ENCODE measurements at regions of chr4 and their contacts with region 1.

Region 1: DNA sequence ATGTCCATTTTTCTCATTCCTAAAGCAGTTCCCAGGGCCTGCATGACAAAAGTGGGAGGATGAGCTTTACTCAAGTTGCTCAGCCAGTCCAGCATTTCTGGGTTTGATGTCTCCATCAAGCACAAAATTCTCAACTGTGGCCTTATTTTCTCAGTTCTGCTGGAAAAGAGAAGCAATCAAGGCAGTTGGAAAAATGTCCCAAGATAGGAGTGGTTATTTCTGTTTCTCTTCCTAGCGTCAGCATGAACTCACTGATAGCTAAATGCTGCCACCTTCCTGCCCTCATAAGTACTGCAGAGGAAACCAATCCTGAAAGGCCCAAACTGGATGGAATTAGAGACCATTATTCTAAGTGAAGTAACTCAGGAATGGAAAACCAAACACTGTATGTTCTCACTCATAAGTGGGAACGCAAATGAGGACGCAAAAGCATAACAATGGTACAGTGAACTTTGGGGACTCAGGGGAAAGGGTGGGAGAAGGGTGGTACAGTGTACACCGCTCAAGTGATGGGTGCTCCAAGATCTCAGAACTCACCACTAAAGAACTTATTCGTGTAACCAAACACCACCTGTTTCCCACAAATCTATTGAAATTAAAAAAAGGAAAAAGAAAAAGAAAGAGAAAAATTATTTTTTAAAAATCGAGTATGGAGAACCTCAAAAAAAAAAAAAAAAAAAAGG is 29.6 kb downstream of the ADH7 start:
- DNase-seq: peak; percentile 74
- ATAC-seq: peak; percentile 67
- H3K4me3 ChIP-seq: no peak overlapping the region
- H3K27ac ChIP-seq: peak overlapping the region; percentile 92
- H3K4me1 ChIP-seq: peaks cover 44% of the 10 kb centered on the region
- H3K27me3 ChIP-seq: no peaks in the 10 kb centered on the region
- CTCF ChIP-seq: peak; percentile 94
- EP300 ChIP-seq: no peak
- POLR2A ChIP-seq: no peak
- RAD21 ChIP-seq: peak; percentile 94

Region 2: DNA sequence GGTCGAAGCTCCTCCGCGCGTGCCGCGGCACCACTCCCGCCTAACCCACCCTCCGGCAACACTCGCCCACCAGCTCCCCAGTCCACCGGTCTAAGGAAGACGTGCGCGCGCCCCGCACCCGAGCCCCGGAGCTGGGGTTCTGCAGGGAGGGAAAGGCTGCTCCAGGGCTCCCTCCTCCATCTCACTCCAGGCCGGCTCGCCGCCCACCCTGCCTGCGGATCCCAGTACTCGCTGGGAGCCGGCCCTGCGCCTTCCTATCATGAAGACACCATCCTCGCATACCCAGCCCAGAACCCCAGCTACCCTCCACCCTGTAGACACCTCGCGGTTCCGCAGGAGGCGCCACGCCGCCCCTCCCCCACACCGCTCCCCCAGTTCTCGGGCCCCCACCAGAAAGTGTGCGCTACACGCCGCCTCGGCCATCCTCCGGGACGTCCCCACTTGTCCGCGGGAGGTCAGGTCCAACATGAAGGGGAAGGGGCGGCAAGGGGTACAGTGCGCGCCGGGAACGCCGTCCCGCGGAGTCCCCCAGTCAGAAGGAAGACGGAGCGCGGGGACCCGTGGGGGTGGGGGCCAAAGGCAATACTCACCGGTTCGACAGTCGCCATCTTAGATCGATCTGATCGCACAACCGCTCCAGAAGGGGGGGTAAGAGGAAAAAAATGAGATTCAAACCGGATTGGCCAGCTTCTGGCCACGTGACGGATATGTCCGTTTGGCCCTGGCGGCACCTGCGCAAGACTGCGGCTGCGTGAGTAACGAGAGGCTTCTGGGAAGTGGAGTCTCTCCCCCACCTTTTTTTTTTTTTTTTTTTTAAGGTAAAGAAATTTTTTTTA is 476.9 kb before region 1 on chr4 and contains the start of gene EIF4E:
- CTCF ChIA-PET with region 1: no interaction called
- POLR2A ChIA-PET with region 1: interaction called, 6 read pairs
- in situ Hi-C with region 1: no loop called
- intact Hi-C with region 1: loop called (anchors 10 kb)
- DNase-seq: peak; percentile 98
- ATAC-seq: peak; percentile 78
- H3K4me3 ChIP-seq: peak within 1 kb of the TSS; percentile 82 to 99 (median 93)
- H3K27ac ChIP-seq: peak within 1 kb of the TSS; percentile 95
- H3K4me1 ChIP-seq: peaks cover 30% of the 10 kb centered on the region
- H3K27me3 ChIP-seq: no peaks in the 10 kb centered on the region; a peak in 1 of 5 replicates
- CTCF ChIP-seq: peak; percentile 42
- EP300 ChIP-seq: 0 out of 4 replicates have a peak, but pooled peaks of 1 of the 2 experiments have one; percentile 39
- POLR2A ChIP-seq: peak; percentile 49 to 67; a peak in 3 of 4 replicates
- RAD21 ChIP-seq: no peak; the same call in 1 of the 2 replicates
- total RNA-seq, gene EIF4E: 194 and 288 TPM in 2 replicates

Region 3: GRCh38 chr4:99088481-99089365 is 316.9 kb before region 1 on chr4 and contains the start of gene ADH5:
- CTCF ChIA-PET with region 1: no interaction called
- POLR2A ChIA-PET with region 1: interaction called, 40 read pairs
- in situ Hi-C with region 1: no loop called
- intact Hi-C with region 1: loop called (anchors 1 kb)
- DNase-seq: peak; percentile 78
- ATAC-seq: peak; percentile 94
- H3K4me3 ChIP-seq: peak within 1 kb of the TSS; percentile 68 to 93 (median 89)
- H3K27ac ChIP-seq: peak within 1 kb of the TSS; percentile 85
- H3K4me1 ChIP-seq: peaks cover 47% of the 10 kb centered on the region
- H3K27me3 ChIP-seq: no peaks in the 10 kb centered on the region; a peak in 1 of 5 replicates
- CTCF ChIP-seq: no peak
- EP300 ChIP-seq: no peak
- POLR2A ChIP-seq: peak; percentile 93 to 97
- RAD21 ChIP-seq: 0 out of 2 replicates have a peak, but pooled peaks have one; percentile 8
- total RNA-seq, gene ADH5: 512 and 855 TPM in 2 replicates

Region 4: DNA sequence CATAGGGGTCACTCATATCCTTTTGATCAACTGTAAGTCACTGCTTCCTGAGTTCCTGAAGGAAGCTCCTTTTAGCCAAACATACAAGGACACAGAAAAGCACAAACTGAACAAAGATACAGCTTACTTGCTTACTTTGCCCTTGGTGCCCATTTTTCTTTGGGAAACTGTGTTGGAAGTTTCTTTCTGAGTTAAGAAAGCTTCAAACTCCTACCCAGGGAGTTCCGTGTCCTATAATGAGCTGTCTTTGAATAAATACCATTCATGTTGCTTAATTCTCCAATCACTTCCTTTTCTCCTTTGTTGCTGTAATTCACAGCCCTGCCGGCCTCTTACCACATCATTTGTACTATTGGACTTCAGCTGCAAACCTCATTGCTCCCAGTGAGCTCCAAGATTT is 261.5 kb before region 1 on chr4 and contains the start of gene ADH4:
- CTCF ChIA-PET with region 1: no interaction called
- POLR2A ChIA-PET with region 1: interaction called, 35 read pairs
- in situ Hi-C with region 1: no loop called
- intact Hi-C with region 1: no loop called
- DNase-seq: peak; percentile 83
- ATAC-seq: peak; percentile 93
- H3K4me3 ChIP-seq: peak within 1 kb of the TSS; percentile 45 to 64 (median 54); a peak in 5 of 6 replicates
- H3K27ac ChIP-seq: peak within 1 kb of the TSS; percentile 96
- H3K4me1 ChIP-seq: peaks cover 59% of the 10 kb centered on the region
- H3K27me3 ChIP-seq: no peaks in the 10 kb centered on the region
- CTCF ChIP-seq: no peak
- EP300 ChIP-seq: peak; percentile 40 to 84; a peak in 2 of 4 replicates
- POLR2A ChIP-seq: peak; percentile 51 to 71; a peak in 3 of 4 replicates
- RAD21 ChIP-seq: no peak
- total RNA-seq, gene ADH4: 31.1 and 50.3 TPM in 2 replicates

Region 5: DNA sequence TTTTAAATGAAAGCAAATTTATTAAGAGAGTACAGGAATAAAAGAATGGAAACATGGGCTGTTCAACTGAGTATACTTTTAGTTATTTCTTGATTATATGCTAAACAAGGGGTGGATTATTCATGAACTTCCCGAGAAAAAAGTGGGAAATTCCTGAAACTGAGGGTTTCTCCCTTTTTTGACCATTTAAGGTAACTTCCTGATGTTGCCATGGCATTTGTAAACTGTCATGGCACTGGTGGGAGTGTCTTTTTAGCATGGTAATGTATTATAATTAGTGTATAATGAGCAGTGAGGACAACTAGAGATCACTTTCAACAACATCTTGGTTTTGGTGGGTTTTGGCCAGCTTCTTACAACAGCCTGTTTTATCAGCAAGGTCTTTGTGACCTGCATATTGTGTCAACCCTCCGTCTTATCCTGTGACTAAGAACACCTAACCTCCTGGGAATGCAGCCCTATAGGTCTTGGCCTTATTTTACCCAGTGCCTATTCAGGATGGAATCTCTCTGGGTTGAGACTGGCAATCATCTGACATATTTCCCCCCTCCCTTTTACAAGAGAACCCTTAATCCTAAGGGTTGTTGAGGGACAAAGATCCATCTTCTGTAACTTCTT is 239.7 kb before region 1 on chr4:
- CTCF ChIA-PET with region 1: no interaction called
- POLR2A ChIA-PET with region 1: interaction called, 18 read pairs
- in situ Hi-C with region 1: no loop called
- intact Hi-C with region 1: no loop called
- DNase-seq: no peak
- ATAC-seq: no peak; the same call in 1 of the 3 replicates
- H3K4me3 ChIP-seq: no peak overlapping the region
- H3K27ac ChIP-seq: no peak overlapping the region
- H3K4me1 ChIP-seq: peaks cover 41% of the 10 kb centered on the region
- H3K27me3 ChIP-seq: no peaks in the 10 kb centered on the region
- CTCF ChIP-seq: no peak
- EP300 ChIP-seq: no peak
- POLR2A ChIP-seq: no peak
- RAD21 ChIP-seq: no peak

Region 6: GRCh38 chr4:99334880-99335279 is 70.7 kb before region 1 on chr4:
- CTCF ChIA-PET with region 1: no interaction called
- POLR2A ChIA-PET with region 1: no interaction called
- in situ Hi-C with region 1: no loop called
- intact Hi-C with region 1: no loop called
- DNase-seq: no peak
- ATAC-seq: no peak
- H3K4me3 ChIP-seq: no peak overlapping the region
- H3K27ac ChIP-seq: no peak overlapping the region
- H3K4me1 ChIP-seq: no peaks in the 10 kb centered on the region
- H3K27me3 ChIP-seq: no peaks in the 10 kb centered on the region
- CTCF ChIP-seq: no peak
- EP300 ChIP-seq: no peak
- POLR2A ChIP-seq: no peak
- RAD21 ChIP-seq: no peak

Region 7: DNA sequence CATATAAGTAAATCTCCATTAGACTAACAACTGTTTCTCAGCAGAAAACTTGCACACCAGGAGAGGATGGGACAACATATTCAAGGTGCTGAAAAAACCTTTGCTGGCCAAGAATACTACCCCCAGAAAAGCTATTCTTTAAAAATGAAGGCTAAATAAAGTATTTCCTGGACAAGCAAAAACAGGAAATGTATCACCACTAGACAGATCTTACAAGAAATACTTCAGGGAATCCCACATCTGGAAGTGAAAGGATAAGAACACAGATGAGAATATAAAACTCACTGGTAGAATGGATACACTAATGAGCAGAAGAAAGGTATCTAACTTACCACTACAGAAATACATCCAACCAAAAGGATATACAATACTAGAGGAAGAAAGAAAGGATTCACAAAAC is 26.0 kb before region 1 on chr4:
- CTCF ChIA-PET with region 1: interaction called, 7 read pairs
- POLR2A ChIA-PET with region 1: interaction called, 7 read pairs
- in situ Hi-C with region 1: no loop called
- intact Hi-C with region 1: loop called (anchors 2 kb)
- DNase-seq: no peak
- ATAC-seq: no peak
- H3K4me3 ChIP-seq: no peak overlapping the region
- H3K27ac ChIP-seq: no peak overlapping the region
- H3K4me1 ChIP-seq: peaks cover 18% of the 10 kb centered on the region
- H3K27me3 ChIP-seq: no peaks in the 10 kb centered on the region
- CTCF ChIP-seq: no peak
- EP300 ChIP-seq: no peak
- POLR2A ChIP-seq: no peak
- RAD21 ChIP-seq: no peak

Region 8: DNA sequence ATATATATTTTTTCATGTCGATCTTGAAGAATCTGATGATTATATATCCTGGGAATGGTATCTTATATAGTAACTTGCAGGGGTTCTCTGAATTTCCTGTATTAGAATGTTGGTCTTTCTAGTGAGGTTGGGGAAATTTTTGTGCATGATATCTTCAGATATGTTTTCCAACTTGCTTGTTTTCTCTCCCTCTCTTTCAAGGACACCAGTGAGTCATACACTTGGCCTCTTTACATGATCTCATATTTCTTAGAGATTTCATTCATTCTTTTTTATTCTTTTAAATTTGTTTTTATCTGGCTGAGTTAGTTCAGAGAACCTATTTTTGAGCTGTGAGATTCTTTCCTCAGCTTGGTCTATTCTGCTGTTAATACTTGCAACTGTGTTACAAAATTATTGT is 78.1 kb after region 1 on chr4:
- CTCF ChIA-PET with region 1: no interaction called
- POLR2A ChIA-PET with region 1: no interaction called
- in situ Hi-C with region 1: no loop called
- intact Hi-C with region 1: no loop called
- DNase-seq: no peak
- ATAC-seq: no peak
- H3K4me3 ChIP-seq: no peak overlapping the region
- H3K27ac ChIP-seq: no peak overlapping the region
- H3K4me1 ChIP-seq: no peaks in the 10 kb centered on the region
- H3K27me3 ChIP-seq: no peaks in the 10 kb centered on the region; a peak in 1 of 5 replicates
- CTCF ChIP-seq: no peak
- EP300 ChIP-seq: no peak
- POLR2A ChIP-seq: no peak
- RAD21 ChIP-seq: no peak